ENCODE measurements at regions of chr5 and their contacts with region 1.

Region 1: DNA sequence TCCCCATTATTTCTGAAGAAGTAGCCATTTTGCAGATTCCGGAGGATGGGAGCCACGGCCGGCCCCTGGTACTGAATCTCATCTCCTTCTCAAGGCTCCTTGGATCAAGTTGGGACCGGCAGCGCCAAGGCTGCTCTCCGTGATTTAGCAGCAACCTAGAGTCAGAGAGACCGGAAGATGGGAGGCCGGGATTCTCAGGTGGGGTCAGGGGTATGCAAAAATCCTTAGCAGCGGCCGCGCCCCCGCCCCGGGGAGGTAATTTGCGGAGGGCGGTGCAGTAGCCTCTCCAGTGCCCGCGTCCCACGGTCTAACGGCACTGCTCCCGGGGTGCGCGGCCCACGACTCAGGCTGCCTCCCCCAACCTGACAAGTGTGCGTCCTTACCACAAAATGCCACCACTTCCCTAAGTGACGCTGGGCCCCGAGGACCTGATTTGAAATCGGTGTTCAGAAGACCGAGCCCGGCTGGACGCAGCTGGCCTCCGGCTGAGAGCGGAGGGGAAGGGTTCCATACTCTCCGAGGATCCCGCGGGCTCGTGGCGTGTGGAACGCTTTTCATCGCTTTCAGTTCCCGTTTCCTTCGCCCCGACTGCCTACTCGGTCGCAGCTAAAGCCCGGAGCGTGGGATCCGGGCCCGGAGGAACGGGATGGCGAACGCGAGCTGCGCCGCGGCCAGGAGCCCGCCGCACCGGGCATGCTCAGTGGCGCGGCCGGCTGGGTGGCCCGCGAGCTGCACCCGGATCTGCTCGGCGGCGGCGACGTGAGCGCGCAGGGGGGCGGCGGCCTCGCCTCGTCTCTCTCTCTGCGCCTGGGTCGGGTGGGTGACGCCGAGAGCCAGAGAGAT is at the start of gene SCAMP1:
- DNase-seq: peak; percentile 71 to 95
- H3K4me3 ChIP-seq: peak within 1 kb of the TSS; percentile 82 to 96
- H3K27ac ChIP-seq: peak within 1 kb of the TSS; percentile 86 to 90
- H3K4me1 ChIP-seq: peaks cover 0 to 17% of the 10 kb centered on the region in 2 donors
- H3K27me3 ChIP-seq: no peaks in the 10 kb centered on the region
- CTCF ChIP-seq: peak; percentile 30 to 63 (median 30)
- total RNA-seq, gene SCAMP1: 15.0 TPM

Region 2: GRCh38 chr5:78377056-78377717 is 17.1 kb after region 1 on chr5:
- intact Hi-C with region 1: loop called (anchors 2 kb)
- DNase-seq: peak in 1 of 2 donors; percentile 65
- H3K4me3 ChIP-seq: no peak overlapping the region
- H3K27ac ChIP-seq: peak overlapping the region; percentile 51 to 69
- H3K4me1 ChIP-seq: peaks cover 0 to 16% of the 10 kb centered on the region in 2 donors
- H3K27me3 ChIP-seq: no peaks in the 10 kb centered on the region
- CTCF ChIP-seq: no peak

Region 3: DNA sequence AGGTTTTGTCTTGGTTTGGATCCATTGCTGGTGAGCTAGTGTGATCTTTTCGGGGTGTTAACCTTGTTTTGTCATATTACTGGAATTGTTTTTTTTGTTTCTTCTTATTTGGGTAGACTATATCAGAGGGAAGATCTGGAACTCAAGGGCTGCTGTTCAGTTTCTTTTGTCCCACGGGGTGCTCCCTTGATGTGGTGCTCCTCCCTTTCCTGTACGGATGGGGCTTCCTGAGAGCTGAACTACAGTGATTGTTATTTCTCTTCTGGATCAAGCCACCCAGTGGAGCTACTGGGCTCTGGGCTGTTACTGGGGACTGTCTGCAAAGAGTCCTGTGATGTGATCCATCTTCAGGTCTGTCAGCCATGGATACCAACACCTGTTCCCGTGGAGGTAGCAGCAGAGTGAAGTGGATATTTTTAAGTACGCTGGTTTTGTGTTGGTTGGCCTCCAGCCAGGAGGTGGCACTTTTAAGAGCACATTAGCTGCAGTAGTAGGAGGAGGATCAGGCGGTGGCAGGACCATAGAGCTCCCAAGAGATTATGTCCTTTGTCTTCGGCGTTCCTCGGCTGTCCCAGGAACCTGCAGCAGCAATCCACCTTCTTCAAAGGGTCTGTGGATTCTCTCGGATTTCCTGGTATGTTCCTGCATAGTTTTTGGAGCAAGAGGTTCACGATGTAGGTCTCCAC is 27.6 kb after region 1 on chr5:
- intact Hi-C with region 1: no loop called
- DNase-seq: no peak
- H3K4me3 ChIP-seq: no peak overlapping the region
- H3K27ac ChIP-seq: no peak overlapping the region
- H3K4me1 ChIP-seq: no peaks in the 10 kb centered on the region
- H3K27me3 ChIP-seq: no peaks in the 10 kb centered on the region
- CTCF ChIP-seq: no peak

Region 4: DNA sequence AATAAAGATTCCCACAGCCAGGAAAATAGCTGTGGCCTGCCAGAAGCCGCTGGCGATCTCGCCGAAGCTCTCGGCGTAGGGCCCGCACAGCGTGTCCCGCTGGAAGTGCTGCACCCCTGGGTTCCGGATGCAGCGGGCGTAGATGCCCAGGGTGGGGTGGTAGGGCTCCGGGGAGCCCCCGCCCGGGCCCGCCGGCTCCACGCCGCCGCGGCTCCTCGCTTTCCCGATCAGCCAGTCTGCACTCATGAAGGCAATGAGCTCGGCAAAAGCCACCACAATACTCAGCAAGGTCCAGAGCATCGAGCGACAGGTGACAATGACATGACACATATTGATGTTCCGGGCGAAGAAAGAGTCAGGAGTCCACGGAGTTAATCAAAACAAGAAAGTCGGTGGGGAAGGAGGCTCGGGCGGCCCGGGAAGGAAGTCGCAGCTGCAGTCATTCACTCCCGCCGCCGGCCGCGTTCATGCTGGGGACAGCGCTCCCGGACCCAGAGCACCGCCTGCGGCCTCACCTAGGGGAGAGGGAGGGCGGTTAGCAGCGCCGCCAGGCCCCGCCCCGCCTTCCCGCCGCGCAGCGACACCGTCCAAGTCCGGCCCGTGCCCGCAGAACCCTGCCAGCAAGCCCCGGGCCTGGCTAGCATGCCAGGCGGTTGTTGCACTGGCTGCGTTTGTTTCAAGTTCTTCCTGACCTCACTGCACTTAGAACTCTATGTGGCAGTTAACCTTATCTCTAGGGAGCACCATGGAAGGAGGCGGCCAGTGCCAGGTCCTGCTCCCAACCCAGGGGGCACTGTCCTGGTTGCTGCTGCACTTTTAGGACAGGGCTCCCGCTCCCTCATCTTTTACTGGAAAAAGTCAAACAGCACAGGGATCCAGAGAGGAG is 150.1 kb after region 1 on chr5:
- intact Hi-C with region 1: loop called (anchors 5 kb)
- DNase-seq: peak in 1 of 2 donors; percentile 85
- H3K4me3 ChIP-seq: peak overlapping the region; percentile 46 to 56
- H3K27ac ChIP-seq: peak overlapping the region; percentile 10 to 18
- H3K4me1 ChIP-seq: peaks cover 0 to 20% of the 10 kb centered on the region in 2 donors
- H3K27me3 ChIP-seq: no peaks in the 10 kb centered on the region
- CTCF ChIP-seq: peak in 2 of 3 experiments; percentile 11 to 25